Adrenal gland (tissue), 19 donors: ENCODE measurements at regions of chr4 and their contacts with region 1.

Region 1: GRCh38 chr4:125314676-125315575 is at the start of gene FAT4:
- DNase-seq: peak; percentile 93 to 96 (median 94)
- H3K4me3 ChIP-seq: peak within 1 kb of the TSS; percentile 67 to 96 (median 86)
- H3K27ac ChIP-seq: peak within 1 kb of the TSS in 3 of 5 donors; percentile 49 to 84 (median 81)
- H3K4me1 ChIP-seq: peaks cover 0 to 15% of the 10 kb centered on the region in 2 donors
- H3K27me3 ChIP-seq: peaks cover 8% of the 10 kb centered on the region
- CTCF ChIP-seq: peak in 1 of 6 experiments; percentile 13
- POLR2A ChIP-seq: peak; percentile 31 to 62
- total RNA-seq, gene FAT4: 4.2 to 9.9 (median 5.1) TPM

Region 2: DNA sequence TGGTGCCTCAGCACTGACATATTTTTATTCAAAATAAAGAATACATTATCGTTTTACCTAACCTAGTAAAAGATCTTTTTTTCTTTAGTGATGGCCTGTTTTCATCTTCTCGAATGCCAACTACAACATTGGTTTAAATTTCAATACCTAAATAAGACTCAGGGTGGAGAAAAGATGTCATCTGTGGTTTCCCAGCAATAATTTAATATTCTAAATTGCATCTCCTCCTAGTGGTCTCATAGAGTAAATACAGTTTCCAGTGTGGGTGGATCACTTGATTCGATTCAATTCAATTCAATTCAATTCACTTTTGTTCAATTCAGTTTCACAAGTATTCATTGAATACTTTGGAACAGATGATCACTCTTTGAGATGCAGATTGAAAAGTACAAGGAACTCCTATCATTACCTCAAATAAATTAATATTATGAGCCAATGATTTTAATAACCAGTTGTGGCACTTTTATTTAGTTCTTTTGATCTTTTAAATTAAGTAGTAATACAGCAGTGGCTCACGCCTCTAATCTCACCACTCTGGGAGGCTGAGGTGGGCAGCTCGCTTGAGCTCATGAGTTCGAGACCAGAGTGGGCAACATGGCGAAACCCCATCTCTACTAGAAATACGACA is 427.0 kb after region 1 on chr4:
- intact Hi-C with region 1: loop called (anchors 10 kb)
- DNase-seq: no peak
- H3K4me3 ChIP-seq: no peak overlapping the region
- H3K27ac ChIP-seq: no peak overlapping the region
- H3K4me1 ChIP-seq: no peaks in the 10 kb centered on the region
- H3K27me3 ChIP-seq: no peaks in the 10 kb centered on the region
- CTCF ChIP-seq: peak; percentile 21 to 58 (median 44)
- POLR2A ChIP-seq: no peak